CD8-positive, alpha-beta T cell (primary cell): ENCODE measurements at regions of chr3 and their contacts with region 1.

Region 1: DNA sequence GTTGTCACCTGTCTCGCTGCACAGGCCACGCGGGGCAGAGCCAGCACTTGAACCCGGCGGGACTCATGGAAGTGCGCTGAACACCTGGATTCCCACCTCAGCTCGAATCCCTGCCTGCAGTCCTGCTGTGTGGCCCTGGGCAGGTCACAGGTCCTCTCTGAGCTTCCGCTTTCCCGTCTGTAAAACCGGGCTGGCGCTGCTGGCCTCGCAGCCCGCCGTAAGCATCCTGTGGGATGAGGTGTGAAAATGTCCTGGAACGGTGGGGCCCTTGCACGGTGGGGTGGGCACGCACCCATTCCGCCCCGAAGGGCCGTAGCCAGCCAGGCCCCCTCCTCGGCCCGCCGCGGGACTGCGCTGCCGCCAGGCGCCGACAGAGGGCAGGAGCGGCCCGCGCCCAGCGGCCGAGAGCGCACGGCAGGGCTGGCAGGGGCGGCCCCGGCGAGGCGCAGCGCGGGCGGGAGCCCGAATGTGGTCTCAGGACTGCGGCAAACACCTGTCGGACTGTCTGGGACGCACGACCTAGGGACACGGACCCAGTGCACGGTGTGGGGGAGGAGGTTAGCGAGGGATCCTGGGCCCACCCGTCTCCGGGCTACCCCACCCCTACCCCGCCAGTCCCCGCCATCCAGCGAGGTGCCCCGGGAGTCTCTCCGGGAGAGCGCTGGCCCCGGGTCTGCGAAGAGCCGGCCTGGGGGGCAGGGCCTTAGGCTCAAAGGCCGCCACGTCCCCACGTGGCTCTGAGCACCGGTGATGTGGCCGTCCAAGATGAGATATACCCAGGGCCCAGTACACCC is 40.4 kb downstream of the DNAJB8 start:
- DNase-seq: peak in 8 of 9 experiments; percentile 21 to 76 (median 56)
- ATAC-seq: peak; percentile 98
- H3K4me3 ChIP-seq: peak overlapping the region in 1 of 2 experiments; percentile 20
- H3K4me3 Mint-ChIP-seq: no peak overlapping the region
- H3K27ac ChIP-seq: no peak overlapping the region
- H3K27ac Mint-ChIP-seq: no peak overlapping the region
- H3K4me1 ChIP-seq: peaks cover 4% of the 10 kb centered on the region
- H3K4me1 Mint-ChIP-seq: no peaks in the 10 kb centered on the region
- H3K27me3 ChIP-seq: peaks cover 0 to 2% of the 10 kb centered on the region in 2 experiments
- H3K27me3 Mint-ChIP-seq: peaks cover 17% of the 10 kb centered on the region
- CTCF ChIP-seq: peak; percentile 96

Region 2: GRCh38 chr3:128383316-128384235 is 42.7 kb before region 1 on chr3:
- CTCF ChIA-PET with region 1: no interaction called
- POLR2A ChIA-PET with region 1: no interaction called
- intact Hi-C with region 1: loop called in 1 of 2 experiments (anchors 1 kb)
- DNase-seq: peak in 7 of 9 experiments; percentile 14 to 83 (median 35)
- ATAC-seq: peak; percentile 44
- H3K4me3 ChIP-seq: no peak overlapping the region
- H3K4me3 Mint-ChIP-seq: no peak overlapping the region
- H3K27ac ChIP-seq: no peak overlapping the region
- H3K27ac Mint-ChIP-seq: peak overlapping the region; percentile 11
- H3K4me1 ChIP-seq: no peaks in the 10 kb centered on the region
- H3K4me1 Mint-ChIP-seq: no peaks in the 10 kb centered on the region
- H3K27me3 ChIP-seq: no peaks in the 10 kb centered on the region
- H3K27me3 Mint-ChIP-seq: no peaks in the 10 kb centered on the region
- CTCF ChIP-seq: no peak

Region 3: GRCh38 chr3:128505771-128506170 is 79.4 kb after region 1 on chr3:
- CTCF ChIA-PET with region 1: interaction called, 10 read pairs
- POLR2A ChIA-PET with region 1: no interaction called
- intact Hi-C with region 1: no loop called
- DNase-seq: no peak
- ATAC-seq: no peak
- H3K4me3 ChIP-seq: no peak overlapping the region
- H3K4me3 Mint-ChIP-seq: no peak overlapping the region
- H3K27ac ChIP-seq: no peak overlapping the region
- H3K27ac Mint-ChIP-seq: no peak overlapping the region
- H3K4me1 ChIP-seq: no peaks in the 10 kb centered on the region
- H3K4me1 Mint-ChIP-seq: no peaks in the 10 kb centered on the region
- H3K27me3 ChIP-seq: no peaks in the 10 kb centered on the region
- H3K27me3 Mint-ChIP-seq: peaks cover 35% of the 10 kb centered on the region
- CTCF ChIP-seq: no peak

Region 4: GRCh38 chr3:129596194-129597086 is 1170.1 kb after region 1 on chr3:
- CTCF ChIA-PET with region 1: no interaction called
- POLR2A ChIA-PET with region 1: no interaction called
- intact Hi-C with region 1: no loop called
- DNase-seq: peak in 1 of 9 experiments; percentile 31
- ATAC-seq: no peak
- H3K4me3 ChIP-seq: no peak overlapping the region
- H3K4me3 Mint-ChIP-seq: no peak overlapping the region
- H3K27ac ChIP-seq: no peak overlapping the region
- H3K27ac Mint-ChIP-seq: no peak overlapping the region
- H3K4me1 ChIP-seq: peaks cover 32% of the 10 kb centered on the region
- H3K4me1 Mint-ChIP-seq: peaks cover 47% of the 10 kb centered on the region
- H3K27me3 ChIP-seq: no peaks in the 10 kb centered on the region
- H3K27me3 Mint-ChIP-seq: peaks cover 2% of the 10 kb centered on the region
- CTCF ChIP-seq: no peak